Mammary epithelial cell (primary cell): ENCODE measurements at regions of chr6 and their contacts with region 1.

Region 1: GRCh38 chr6:15132854-15133670 is 112.8 kb upstream of the JARID2 start:
- DNase-seq: peak; percentile 99
- H3K4me3 ChIP-seq: peak overlapping the region in 2 of 3 experiments; percentile 35 to 36
- H3K27ac ChIP-seq: peak overlapping the region; percentile 92
- H3K4me1 ChIP-seq: peaks cover 30% of the 10 kb centered on the region
- H3K27me3 ChIP-seq: no peaks in the 10 kb centered on the region
- CTCF ChIP-seq: no peak

Region 2: GRCh38 chr6:14743465-14744211 is 389.4 kb before region 1 on chr6:
- CTCF ChIA-PET with region 1: no interaction called
- dilution Hi-C with region 1: no loop called
- in situ Hi-C with region 1: no loop called
- intact Hi-C with region 1: loop called (anchors 5 kb)
- DNase-seq: peak; percentile 99
- H3K4me3 ChIP-seq: no peak overlapping the region
- H3K27ac ChIP-seq: peak overlapping the region; percentile 99
- H3K4me1 ChIP-seq: peaks cover 31% of the 10 kb centered on the region
- H3K27me3 ChIP-seq: no peaks in the 10 kb centered on the region
- CTCF ChIP-seq: no peak

Region 3: DNA sequence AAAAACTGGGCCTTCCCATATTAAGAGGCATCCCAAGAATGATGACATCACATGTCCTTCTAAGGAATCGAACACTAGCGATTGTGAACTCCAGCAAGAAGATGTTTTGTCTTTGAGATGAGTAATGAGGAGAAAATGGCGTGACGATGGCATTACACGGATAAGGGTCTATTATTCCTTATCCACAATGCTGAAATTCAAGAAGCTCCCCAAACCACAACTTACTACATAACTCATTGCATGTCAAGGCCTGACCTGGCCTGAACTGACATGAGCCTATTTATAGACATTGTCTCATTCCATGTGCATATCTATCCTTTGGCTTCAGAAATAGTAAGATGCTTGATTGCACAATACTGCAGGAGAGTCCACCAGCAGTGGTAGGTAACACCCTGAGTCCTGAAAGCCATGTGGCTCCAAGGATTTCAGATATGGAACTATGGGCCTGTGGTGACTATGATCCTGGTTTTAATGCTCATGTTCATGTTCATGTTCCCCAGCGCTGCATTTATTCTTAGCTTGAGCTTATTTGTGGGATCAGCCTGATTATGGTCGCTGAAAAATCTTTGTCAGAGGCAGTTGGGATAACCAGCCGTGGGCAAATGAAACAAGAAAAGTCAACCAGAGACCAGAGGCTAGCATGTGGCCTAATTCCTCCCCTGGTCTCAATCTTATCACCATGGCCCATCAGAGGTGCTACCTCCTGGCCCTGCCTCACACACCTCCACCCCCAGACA is 70.4 kb before region 1 on chr6:
- CTCF ChIA-PET with region 1: no interaction called
- dilution Hi-C with region 1: no loop called
- in situ Hi-C with region 1: no loop called
- intact Hi-C with region 1: loop called (anchors 2 kb)
- DNase-seq: peak; percentile 100
- H3K4me3 ChIP-seq: no peak overlapping the region
- H3K27ac ChIP-seq: peak overlapping the region; percentile 77
- H3K4me1 ChIP-seq: peaks cover 39% of the 10 kb centered on the region
- H3K27me3 ChIP-seq: no peaks in the 10 kb centered on the region
- CTCF ChIP-seq: no peak